ENCODE measurements at regions of chr12 and their contacts with region 1.

Region 1: GRCh38 chr12:7915559-7916403 is 20.2 kb downstream of the SLC2A3 start:
- DNase-seq: no peak

Region 2: GRCh38 chr12:7197841-7198240 is 717.9 kb before region 1 on chr12:
- intact Hi-C with region 1: no loop called
- DNase-seq: no peak

Region 3: GRCh38 chr12:7344833-7345606 is 570.8 kb before region 1 on chr12:
- intact Hi-C with region 1: no loop called
- DNase-seq: no peak

Region 4: GRCh38 chr12:7869127-7869526 is 46.7 kb before region 1 on chr12:
- intact Hi-C with region 1: loop called (anchors 10 kb)
- DNase-seq: no peak

Region 5: GRCh38 chr12:8156845-8157244 is 241.1 kb after region 1 on chr12 and contains the start of gene ZNF705A:
- intact Hi-C with region 1: no loop called
- DNase-seq: no peak

Measured in posterior cingulate gyrus (tissue), 11 donors.